ENCODE measurements at regions of chr6 and their contacts with region 1.

Region 1: DNA sequence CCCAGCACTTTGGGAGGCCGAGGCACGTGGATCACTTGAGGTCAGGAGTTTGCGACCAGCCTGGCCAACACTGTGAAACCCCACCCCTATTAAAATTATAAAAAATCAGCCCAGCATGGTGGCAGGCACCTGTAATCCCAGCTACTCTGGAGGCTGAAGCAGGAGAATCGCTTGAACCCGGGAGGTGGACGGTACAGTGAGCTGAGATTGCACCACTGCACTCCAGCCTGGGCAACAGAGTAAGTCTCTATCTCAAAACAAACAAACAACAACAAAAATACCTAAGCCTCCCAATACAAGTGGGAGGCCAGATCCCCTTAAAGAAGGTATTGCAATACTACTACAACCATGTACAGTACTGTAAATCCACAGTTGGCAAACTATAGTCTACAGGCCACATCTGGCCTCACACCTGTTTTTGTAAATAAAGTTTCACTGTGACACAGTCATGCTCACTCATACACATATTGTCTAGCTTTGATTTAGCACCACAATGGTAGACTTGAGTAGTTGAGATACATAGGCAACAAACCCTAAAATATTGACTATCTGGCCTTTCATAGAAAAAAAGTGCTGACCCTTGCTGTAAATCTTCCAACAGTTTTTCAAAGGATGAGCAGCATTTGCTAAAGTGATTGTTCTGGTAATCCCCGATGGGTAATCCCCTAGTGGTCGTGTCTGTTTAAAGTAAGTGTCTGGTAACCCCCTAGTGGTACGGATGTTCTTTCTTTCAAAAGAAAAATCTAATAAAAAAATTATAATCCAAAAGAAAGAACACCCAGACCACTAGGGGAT is 202.0 kb downstream of the RNGTT start:
- DNase-seq: peak; percentile 77
- ATAC-seq: peak; percentile 80
- H3K4me3 ChIP-seq: no peak overlapping the region
- H3K27ac ChIP-seq: peak overlapping the region; percentile 94
- H3K4me1 ChIP-seq: peaks cover 13% of the 10 kb centered on the region
- H3K27me3 ChIP-seq: no peaks in the 10 kb centered on the region
- CTCF ChIP-seq: peak; percentile 26 to 42 (median 37); a peak in 4 of 6 replicates
- EP300 ChIP-seq: peak; percentile 56 to 67; a peak in 2 of 4 replicates
- POLR2A ChIP-seq: no peak
- RAD21 ChIP-seq: peak; percentile 71

Region 2: DNA sequence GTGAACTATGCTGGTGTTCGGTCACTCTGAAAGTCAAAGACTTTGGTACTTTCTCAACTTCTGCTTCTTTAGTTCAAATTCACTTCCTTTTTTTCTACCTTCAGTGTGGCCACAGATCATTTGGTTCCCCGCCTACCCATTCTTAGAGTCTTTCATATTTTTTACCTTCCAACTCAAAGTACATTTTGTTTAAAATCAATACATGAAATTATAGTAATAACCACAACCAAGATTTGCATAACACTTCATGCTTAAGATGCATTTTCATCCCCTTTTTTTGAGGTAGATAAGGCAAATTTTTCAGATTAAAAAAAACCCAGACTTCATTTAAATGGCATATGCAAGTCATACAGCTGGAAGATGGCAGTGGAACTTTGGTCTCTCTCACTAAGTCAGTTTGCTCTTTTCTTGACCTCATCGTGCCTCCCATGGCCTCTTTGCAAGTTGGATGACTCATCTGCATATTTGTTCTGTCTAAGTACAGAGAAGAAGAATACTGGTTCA is 583.4 kb before region 1 on chr6:
- CTCF ChIA-PET with region 1: no interaction called
- POLR2A ChIA-PET with region 1: interaction called, 3 read pairs
- RAD21 ChIA-PET with region 1: no interaction called
- SMC1A ChIA-PET with region 1: no interaction called
- in situ Hi-C with region 1: no loop called
- intact Hi-C with region 1: loop called (anchors 2 kb)
- DNase-seq: peak; percentile 32
- ATAC-seq: peak; percentile 75
- H3K4me3 ChIP-seq: no peak overlapping the region
- H3K27ac ChIP-seq: no peak overlapping the region
- H3K4me1 ChIP-seq: peaks cover 16% of the 10 kb centered on the region; the same call in 1 of the 2 replicates
- H3K27me3 ChIP-seq: no peaks in the 10 kb centered on the region
- CTCF ChIP-seq: no peak
- EP300 ChIP-seq: no peak
- POLR2A ChIP-seq: no peak
- RAD21 ChIP-seq: no peak

Region 3: GRCh38 chr6:88641178-88641903 is 120.1 kb before region 1 on chr6:
- CTCF ChIA-PET with region 1: interaction called, 11 read pairs
- POLR2A ChIA-PET with region 1: interaction called, 13 read pairs
- RAD21 ChIA-PET with region 1: interaction called, 63 read pairs
- SMC1A ChIA-PET with region 1: interaction called, 41 read pairs
- in situ Hi-C with region 1: no loop called
- intact Hi-C with region 1: no loop called
- DNase-seq: peak; percentile 88
- ATAC-seq: peak; percentile 92
- H3K4me3 ChIP-seq: 0 out of 2 replicates have a peak overlapping the region, but pooled peaks have one; percentile 8
- H3K27ac ChIP-seq: peak overlapping the region; percentile 88
- H3K4me1 ChIP-seq: peaks cover 15% of the 10 kb centered on the region
- H3K27me3 ChIP-seq: no peaks in the 10 kb centered on the region
- CTCF ChIP-seq: no peak
- EP300 ChIP-seq: peak; percentile 12 to 58; a peak in 1 of 4 replicates
- POLR2A ChIP-seq: no peak
- RAD21 ChIP-seq: no peak

Region 4: DNA sequence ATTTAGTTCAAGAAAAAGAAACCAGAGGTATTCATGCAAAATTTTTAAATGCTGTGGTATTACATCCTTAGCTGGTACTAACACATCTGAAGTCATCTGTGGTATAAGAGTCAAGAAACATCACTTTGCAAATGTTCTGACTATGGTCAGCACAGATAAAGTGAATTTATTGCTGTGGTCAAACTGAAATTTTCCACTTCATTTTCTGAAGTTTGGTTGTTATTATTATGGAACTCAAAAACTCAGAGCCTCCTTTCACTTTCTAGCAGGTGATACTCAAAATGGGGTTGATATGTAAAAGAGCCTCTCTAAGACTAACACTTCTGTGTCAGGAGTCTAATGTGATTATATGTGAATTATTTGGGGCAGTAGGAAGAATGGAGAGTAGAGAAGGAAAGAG is 55.8 kb before region 1 on chr6:
- CTCF ChIA-PET with region 1: interaction called, 5 read pairs
- POLR2A ChIA-PET with region 1: interaction called, 3 read pairs
- RAD21 ChIA-PET with region 1: interaction called, 12 read pairs
- SMC1A ChIA-PET with region 1: interaction called, 15 read pairs
- in situ Hi-C with region 1: no loop called
- intact Hi-C with region 1: no loop called
- DNase-seq: peak; percentile 81
- ATAC-seq: peak; percentile 96
- H3K4me3 ChIP-seq: no peak overlapping the region
- H3K27ac ChIP-seq: peak overlapping the region; percentile 53; the same call in 1 of the 2 replicates
- H3K4me1 ChIP-seq: peaks cover 22% of the 10 kb centered on the region; the same call in 1 of the 2 replicates
- H3K27me3 ChIP-seq: no peaks in the 10 kb centered on the region
- CTCF ChIP-seq: no peak
- EP300 ChIP-seq: peak; percentile 78 to 85
- POLR2A ChIP-seq: no peak
- RAD21 ChIP-seq: 0 out of 2 replicates have a peak, but pooled peaks have one; percentile 2

Region 5: DNA sequence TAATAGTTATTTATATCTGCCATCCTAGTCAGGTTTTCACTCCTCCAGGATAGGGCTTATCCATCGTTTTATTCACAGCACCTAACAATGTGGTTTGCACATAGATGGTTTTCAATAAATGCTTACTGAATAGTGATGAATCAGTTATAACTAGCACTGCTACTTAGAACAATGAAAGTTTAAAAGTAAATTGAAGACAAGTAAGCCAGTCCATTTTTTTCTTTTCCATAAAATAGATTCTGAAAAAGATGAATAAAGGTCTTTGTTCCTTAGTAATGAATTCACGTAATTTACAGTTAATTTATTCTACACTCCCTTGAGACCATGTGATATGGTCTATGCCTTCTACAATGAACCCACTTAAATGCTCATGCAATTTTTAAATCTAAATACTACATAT is 10.5 kb before region 1 on chr6:
- CTCF ChIA-PET with region 1: interaction called, 6 read pairs
- POLR2A ChIA-PET with region 1: interaction called, 4 read pairs
- RAD21 ChIA-PET with region 1: interaction called, 4 read pairs
- SMC1A ChIA-PET with region 1: interaction called, 13 read pairs
- in situ Hi-C with region 1: no loop called
- intact Hi-C with region 1: no loop called
- DNase-seq: no peak
- ATAC-seq: no peak
- H3K4me3 ChIP-seq: no peak overlapping the region
- H3K27ac ChIP-seq: no peak overlapping the region
- H3K4me1 ChIP-seq: no peaks in the 10 kb centered on the region
- H3K27me3 ChIP-seq: no peaks in the 10 kb centered on the region
- CTCF ChIP-seq: no peak
- EP300 ChIP-seq: no peak
- POLR2A ChIP-seq: no peak
- RAD21 ChIP-seq: no peak

Measured in GM12878 (cell line).